ENCODE measurements at regions of chr20 and their contacts with region 1.

Region 1: DNA sequence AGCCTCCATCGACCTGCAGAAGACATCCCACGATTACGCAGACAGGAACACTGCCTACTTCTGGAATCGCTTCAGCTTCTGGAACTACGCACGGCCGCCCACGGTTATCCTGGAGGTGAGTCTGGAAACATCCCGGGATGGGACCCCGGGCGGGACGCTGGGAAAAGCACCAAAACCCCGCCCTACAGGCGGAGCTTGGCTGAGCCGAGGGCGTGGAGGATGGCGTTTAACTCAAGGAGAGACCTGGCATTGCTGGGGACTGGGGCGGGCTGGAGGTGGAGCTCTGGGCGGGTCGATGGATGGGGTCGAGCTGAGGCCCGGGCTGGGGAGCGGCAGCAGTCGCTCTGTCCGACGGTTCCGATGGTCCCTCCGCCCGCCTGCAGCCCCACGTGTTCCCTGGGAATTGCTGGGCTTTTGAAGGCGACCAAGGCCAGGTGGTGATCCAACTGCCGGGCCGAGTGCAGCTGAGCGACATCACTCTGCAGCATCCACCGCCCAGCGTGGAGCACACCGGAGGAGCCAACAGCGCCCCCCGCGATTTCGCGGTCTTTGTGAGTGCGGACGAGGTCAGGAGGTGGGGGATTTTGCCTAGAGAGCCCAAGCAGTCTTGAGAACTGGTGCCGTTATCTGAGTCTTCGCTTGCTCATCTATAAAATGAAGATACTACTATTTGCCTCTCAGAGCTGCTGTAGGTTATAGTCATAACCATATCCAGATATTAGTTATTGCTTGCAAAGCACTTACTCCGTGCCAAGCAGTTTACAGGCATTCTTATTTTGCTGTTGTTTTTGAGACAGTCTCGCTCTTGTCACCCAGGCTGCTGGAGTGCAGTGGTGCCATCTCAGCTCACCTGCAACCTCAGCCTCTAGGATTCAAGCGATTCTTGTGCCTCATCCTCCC is 3.8 kb downstream of the SPAG4 start:
- DNase-seq: peak; percentile 26 to 58 (median 34)
- H3K4me3 ChIP-seq: peak overlapping the region; percentile 7 to 74 (median 39)
- H3K4me3 Mint-ChIP-seq: peak overlapping the region; percentile 80 to 97
- H3K27ac ChIP-seq: no peak overlapping the region
- H3K27ac Mint-ChIP-seq: peak overlapping the region in 1 of 7 donors; percentile 46
- H3K4me1 ChIP-seq: peaks cover 36 to 47% of the 10 kb centered on the region in 2 donors
- H3K4me1 Mint-ChIP-seq: peaks cover 42% of the 10 kb centered on the region
- H3K27me3 ChIP-seq: peaks cover 16 to 32% of the 10 kb centered on the region in 2 donors
- H3K27me3 Mint-ChIP-seq: peaks cover 38 to 45% (median 39%) of the 10 kb centered on the region in 3 donors
- CTCF ChIP-seq: peak; percentile 66

Region 2: GRCh38 chr20:35454881-35455609 is 164.4 kb before region 1 on chr20 and contains the start of gene CEP250:
- intact Hi-C with region 1: loop called in 1 of 2 experiments (anchors 10 kb)
- DNase-seq: peak; percentile 82 to 90 (median 86)
- H3K4me3 ChIP-seq: peak within 1 kb of the TSS; percentile 81 to 97 (median 85)
- H3K4me3 Mint-ChIP-seq: peak within 1 kb of the TSS; percentile 87 to 95
- H3K27ac ChIP-seq: peak within 1 kb of the TSS; percentile 63 to 94
- H3K27ac Mint-ChIP-seq: peak within 1 kb of the TSS; percentile 85 to 99 (median 98)
- H3K4me1 ChIP-seq: peaks cover 8 to 22% of the 10 kb centered on the region in 2 donors
- H3K4me1 Mint-ChIP-seq: peaks cover 17% of the 10 kb centered on the region
- H3K27me3 ChIP-seq: no peaks in the 10 kb centered on the region
- H3K27me3 Mint-ChIP-seq: no peaks in the 10 kb centered on the region
- CTCF ChIP-seq: no peak
- polyA plus RNA-seq, gene CEP250: 0.81 to 5.9 (median 1.2) TPM

Region 3: GRCh38 chr20:35541783-35542588 is 77.5 kb before region 1 on chr20 and contains the start of gene ERGIC3:
- intact Hi-C with region 1: loop called in 1 of 2 experiments (anchors 2 kb)
- DNase-seq: peak; percentile 93 to 96 (median 93)
- H3K4me3 ChIP-seq: peak within 1 kb of the TSS; percentile 70 to 93 (median 89)
- H3K4me3 Mint-ChIP-seq: peak within 1 kb of the TSS; percentile 88 to 93
- H3K27ac ChIP-seq: peak within 1 kb of the TSS; percentile 40 to 90
- H3K27ac Mint-ChIP-seq: peak within 1 kb of the TSS; percentile 57 to 94 (median 90)
- H3K4me1 ChIP-seq: peaks cover 13 to 19% of the 10 kb centered on the region in 2 donors
- H3K4me1 Mint-ChIP-seq: peaks cover 15% of the 10 kb centered on the region
- H3K27me3 ChIP-seq: no peaks in the 10 kb centered on the region
- H3K27me3 Mint-ChIP-seq: peaks cover 0 to 1% (median 0%) of the 10 kb centered on the region in 3 donors
- CTCF ChIP-seq: no peak
- polyA plus RNA-seq, gene ERGIC3: 128 to 371 (median 130) TPM

Region 4: DNA sequence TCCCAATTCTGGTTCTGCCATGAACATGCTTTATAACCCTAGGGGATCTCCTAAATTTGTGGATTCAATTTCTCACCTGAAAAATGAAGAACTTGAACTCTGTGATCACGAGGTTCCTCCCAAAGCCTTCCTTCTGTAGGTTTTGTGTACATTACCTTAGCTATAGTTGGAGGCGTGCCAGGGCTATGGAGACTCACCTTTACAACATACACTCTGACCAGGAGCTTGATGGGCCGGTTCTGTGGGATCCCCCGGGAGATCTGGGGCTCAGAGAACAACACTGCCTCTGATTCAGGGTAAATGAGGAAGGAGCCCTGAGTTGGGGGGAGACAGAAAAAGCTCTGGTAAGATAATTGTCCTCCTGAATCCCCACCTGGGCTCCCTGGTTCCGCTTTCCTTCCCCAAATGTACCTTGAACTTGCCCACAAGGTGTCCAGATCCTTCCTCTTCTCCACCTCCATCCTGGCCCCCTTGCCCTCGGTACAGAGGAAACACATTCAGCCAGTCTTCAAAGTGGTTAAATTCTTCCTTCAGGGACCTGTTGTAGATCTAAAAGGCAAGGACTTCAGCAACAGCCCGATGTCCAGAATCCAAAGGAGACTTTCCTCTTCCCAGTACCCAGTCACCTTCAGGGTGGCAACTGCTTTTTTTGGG is 43.3 kb before region 1 on chr20:
- intact Hi-C with region 1: no loop called
- DNase-seq: no peak
- H3K4me3 ChIP-seq: no peak overlapping the region
- H3K4me3 Mint-ChIP-seq: no peak overlapping the region
- H3K27ac ChIP-seq: no peak overlapping the region
- H3K27ac Mint-ChIP-seq: no peak overlapping the region
- H3K4me1 ChIP-seq: no peaks in the 10 kb centered on the region
- H3K4me1 Mint-ChIP-seq: no peaks in the 10 kb centered on the region
- H3K27me3 ChIP-seq: no peaks in the 10 kb centered on the region
- H3K27me3 Mint-ChIP-seq: peaks cover 5 to 6% (median 6%) of the 10 kb centered on the region in 3 donors
- CTCF ChIP-seq: no peak

Region 5: GRCh38 chr20:35664544-35665221 is 45.2 kb after region 1 on chr20 and contains the starts of genes CPNE1 and RBM12:
- intact Hi-C with region 1: loop called (anchors 2 to 10 kb)
- DNase-seq: peak; percentile 92 to 94 (median 93)
- H3K4me3 ChIP-seq: peak within 1 kb of the TSS; percentile 74 to 85 (median 85)
- H3K4me3 Mint-ChIP-seq: peak within 1 kb of the TSS; percentile 88 to 96
- H3K27ac ChIP-seq: peak within 1 kb of the TSS; percentile 88 to 97
- H3K27ac Mint-ChIP-seq: peak within 1 kb of the TSS; percentile 97 to 100 (median 99)
- H3K4me1 ChIP-seq: peaks cover 33 to 37% of the 10 kb centered on the region in 2 donors
- H3K4me1 Mint-ChIP-seq: peaks cover 39% of the 10 kb centered on the region
- H3K27me3 ChIP-seq: no peaks in the 10 kb centered on the region
- H3K27me3 Mint-ChIP-seq: no peaks in the 10 kb centered on the region
- CTCF ChIP-seq: no peak
- polyA plus RNA-seq, gene CPNE1: 153 to 210 (median 167) TPM
- polyA plus RNA-seq, gene RBM12: 21.5 to 32.8 (median 30.4) TPM

Region 6: DNA sequence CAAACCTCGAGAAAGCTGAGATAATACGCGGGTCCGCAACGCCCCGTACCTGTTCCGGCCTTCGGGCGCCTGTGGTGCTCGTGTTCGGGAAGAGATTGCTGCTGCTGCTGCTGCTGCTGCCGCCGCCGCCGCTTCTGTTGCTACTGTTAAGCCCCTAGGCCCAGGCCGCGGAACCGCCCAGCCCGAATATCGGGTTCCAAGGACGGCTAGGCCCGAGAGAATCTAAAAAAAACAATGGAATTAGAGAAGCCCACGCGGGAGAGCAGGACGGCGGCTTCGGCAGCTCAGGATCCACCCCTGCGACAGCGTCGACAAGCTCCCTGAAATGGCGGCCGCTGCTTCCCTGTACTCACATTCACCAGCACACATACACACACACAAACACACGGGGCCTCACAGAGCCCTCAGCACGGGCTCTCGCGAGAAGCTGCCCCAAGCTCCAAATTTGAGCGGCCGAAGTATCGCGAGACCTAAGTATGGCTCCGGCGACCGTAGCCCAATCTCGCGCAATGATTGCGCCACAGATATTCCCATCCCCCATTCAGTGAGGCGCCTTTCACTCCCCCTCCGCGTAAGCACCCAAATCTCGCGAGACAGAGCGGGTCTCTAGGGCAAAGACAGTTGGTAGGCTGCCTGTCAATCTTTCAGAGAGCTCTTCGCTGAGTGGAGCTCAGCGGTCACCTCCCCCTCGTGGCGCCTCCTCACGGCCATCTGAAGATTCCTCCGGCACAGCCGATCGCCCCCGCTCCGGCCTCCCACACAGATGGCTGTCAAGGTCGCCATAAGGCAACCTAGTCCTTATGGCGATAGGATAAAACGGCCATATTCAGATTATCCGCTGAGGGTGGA is 122.7 kb after region 1 on chr20 and contains the start of gene RBM39:
- intact Hi-C with region 1: loop called in 1 of 2 experiments (anchors 5 kb)
- DNase-seq: peak; percentile 100
- H3K4me3 ChIP-seq: peak within 1 kb of the TSS; percentile 78 to 95 (median 91)
- H3K4me3 Mint-ChIP-seq: peak within 1 kb of the TSS; percentile 99 to 100
- H3K27ac ChIP-seq: peak within 1 kb of the TSS; percentile 99 to 100
- H3K27ac Mint-ChIP-seq: peak within 1 kb of the TSS; percentile 97 to 100 (median 100)
- H3K4me1 ChIP-seq: peaks cover 40 to 52% of the 10 kb centered on the region in 2 donors
- H3K4me1 Mint-ChIP-seq: peaks cover 42% of the 10 kb centered on the region
- H3K27me3 ChIP-seq: no peaks in the 10 kb centered on the region
- H3K27me3 Mint-ChIP-seq: no peaks in the 10 kb centered on the region
- CTCF ChIP-seq: no peak
- polyA plus RNA-seq, gene RBM39: 89.5 to 209 (median 98.0) TPM

Region 7: GRCh38 chr20:35771689-35772562 is 152.5 kb after region 1 on chr20 and contains the start of gene PHF20:
- intact Hi-C with region 1: loop called in 1 of 2 experiments (anchors 5 kb)
- DNase-seq: peak; percentile 97 to 99 (median 99)
- H3K4me3 ChIP-seq: peak within 1 kb of the TSS; percentile 73 to 98 (median 94)
- H3K4me3 Mint-ChIP-seq: peak within 1 kb of the TSS; percentile 88 to 90
- H3K27ac ChIP-seq: peak within 1 kb of the TSS; percentile 87 to 95
- H3K27ac Mint-ChIP-seq: peak within 1 kb of the TSS; percentile 98 to 100 (median 99)
- H3K4me1 ChIP-seq: peaks cover 64 to 74% of the 10 kb centered on the region in 2 donors
- H3K4me1 Mint-ChIP-seq: peaks cover 72% of the 10 kb centered on the region
- H3K27me3 ChIP-seq: no peaks in the 10 kb centered on the region
- H3K27me3 Mint-ChIP-seq: peaks cover 0 to 6% (median 3%) of the 10 kb centered on the region in 3 donors
- CTCF ChIP-seq: no peak
- polyA plus RNA-seq, gene PHF20: 54.7 to 78.2 (median 73.6) TPM